Right cardiac atrium (tissue), 5 donors: ENCODE measurements at regions of chr15 and their contacts with region 1.

Region 1: GRCh38 chr15:75201609-75202250 is at the start of gene C15orf39:
- DNase-seq: peak; percentile 75 to 91 (median 90)
- ATAC-seq: peak; percentile 79 to 84
- H3K4me3 ChIP-seq: peak within 1 kb of the TSS; percentile 52
- H3K27ac ChIP-seq: peak within 1 kb of the TSS; percentile 69
- H3K4me1 ChIP-seq: peaks cover 3% of the 10 kb centered on the region
- H3K27me3 ChIP-seq: no peaks in the 10 kb centered on the region
- total RNA-seq, gene C15orf39: 7.4 to 12.7 (median 9.1) TPM

Region 2: DNA sequence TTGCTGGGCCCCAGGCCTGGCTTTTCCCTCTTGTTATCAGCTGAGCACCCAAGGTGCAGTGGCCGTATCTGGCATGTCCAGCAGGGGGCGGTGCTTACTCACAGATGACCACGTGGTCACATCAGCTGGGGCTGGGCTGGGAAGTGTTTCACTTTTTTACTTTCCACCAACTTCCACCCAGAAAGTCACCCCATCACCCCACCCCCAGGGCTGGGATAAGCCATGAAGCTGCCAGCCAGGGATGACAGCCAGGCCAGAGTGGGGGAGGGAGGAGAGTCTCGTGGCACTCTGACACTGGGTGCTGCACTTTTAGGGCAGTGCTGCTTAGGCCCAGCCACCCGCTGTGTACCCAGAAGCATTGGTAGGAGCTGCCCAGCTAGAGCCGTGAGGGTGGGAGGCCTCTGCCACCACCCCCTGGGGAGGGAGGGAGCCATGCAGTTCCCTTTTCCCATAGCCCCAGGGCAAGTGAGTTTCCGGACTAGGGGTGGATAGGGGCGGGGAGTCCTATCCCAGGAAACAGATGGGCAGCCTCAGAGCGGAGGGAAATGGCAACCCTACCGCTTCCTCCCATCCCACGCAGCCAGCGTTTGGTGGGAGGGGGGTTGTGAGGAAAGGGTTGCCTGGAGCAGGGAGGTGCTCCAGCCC is 172.2 kb before region 1 on chr15:
- intact Hi-C with region 1: loop called in 3 of 4 experiments (anchors 1 to 5 kb)
- DNase-seq: peak; percentile 94 to 98 (median 96)
- ATAC-seq: peak; percentile 87 to 88
- H3K4me3 ChIP-seq: no peak overlapping the region
- H3K27ac ChIP-seq: peak overlapping the region; percentile 50
- H3K4me1 ChIP-seq: peaks cover 8% of the 10 kb centered on the region
- H3K27me3 ChIP-seq: no peaks in the 10 kb centered on the region

Region 3: DNA sequence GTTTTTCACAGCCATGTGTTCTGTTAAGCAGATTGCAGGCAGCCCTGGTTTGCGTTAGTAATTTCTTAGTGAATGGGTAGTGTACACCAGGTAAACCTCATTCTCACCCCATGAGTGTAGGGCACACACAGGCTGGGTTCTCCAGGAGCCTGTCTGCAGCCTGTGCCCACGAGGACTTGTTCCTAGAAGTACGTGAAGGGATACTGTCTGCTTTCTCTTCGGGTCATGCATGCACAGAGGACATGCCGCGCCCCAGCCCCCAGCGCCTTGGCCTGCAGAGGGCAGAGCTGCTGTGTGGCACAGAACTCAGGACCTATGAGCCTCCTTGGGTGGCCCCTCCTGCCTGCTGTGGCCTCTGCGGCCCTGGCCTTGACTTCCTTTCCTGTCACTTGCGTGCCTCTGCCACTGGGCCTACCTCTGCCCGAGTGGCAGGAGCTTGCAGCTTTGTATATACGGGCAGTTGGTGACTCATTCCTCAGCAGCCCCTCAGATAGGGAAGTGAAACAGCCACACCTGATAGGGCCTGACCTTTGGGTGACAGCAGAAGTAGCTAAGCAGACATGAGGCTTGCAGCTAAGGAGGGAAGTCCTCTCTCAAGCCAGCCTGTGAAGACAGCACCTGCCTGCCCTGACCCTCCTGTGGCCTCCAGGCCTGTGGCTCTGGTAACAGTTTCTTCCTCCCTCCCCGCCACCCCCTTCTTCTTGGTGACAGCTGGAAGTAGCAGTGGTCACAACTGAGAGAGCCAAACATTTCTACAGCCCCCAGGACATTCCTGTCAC is 158.8 kb before region 1 on chr15:
- intact Hi-C with region 1: loop called in 2 of 4 experiments (anchors 1 to 5 kb)
- DNase-seq: peak; percentile 83 to 94 (median 92)
- ATAC-seq: peak; percentile 57 to 63
- H3K4me3 ChIP-seq: no peak overlapping the region
- H3K27ac ChIP-seq: peak overlapping the region; percentile 95
- H3K4me1 ChIP-seq: peaks cover 31% of the 10 kb centered on the region
- H3K27me3 ChIP-seq: no peaks in the 10 kb centered on the region

Region 4: DNA sequence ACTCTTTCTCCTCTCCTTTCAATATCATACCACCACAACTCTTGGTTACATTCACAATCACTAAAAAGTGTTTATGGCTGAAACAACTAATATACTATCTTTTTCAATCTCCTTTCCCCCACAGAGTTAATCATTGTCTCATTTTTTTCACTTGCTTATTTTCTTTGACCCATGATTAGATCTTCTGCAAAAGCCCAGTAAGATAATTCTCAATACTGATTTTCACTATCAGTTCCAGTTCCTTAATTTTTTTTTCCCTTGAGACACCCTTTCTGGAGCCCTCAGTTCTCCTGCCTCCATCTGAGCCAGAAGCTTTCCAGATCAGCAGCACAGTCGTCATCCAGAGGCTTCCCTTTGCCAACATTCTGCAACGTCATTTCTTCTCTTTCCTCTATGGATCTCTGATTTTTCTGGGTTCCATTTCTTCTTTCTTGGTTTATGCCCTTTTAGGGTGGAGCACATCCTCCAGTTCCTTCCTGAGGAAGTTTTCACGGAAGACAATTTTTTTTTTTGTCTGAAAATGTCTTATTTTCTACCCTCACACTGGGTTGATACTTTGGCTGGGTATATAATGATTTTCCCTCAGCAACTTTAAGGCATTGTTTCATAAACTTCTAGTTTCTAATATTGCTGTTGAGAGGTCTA is 88.8 kb before region 1 on chr15:
- intact Hi-C with region 1: loop called in 1 of 4 experiments (anchors 10 kb)
- DNase-seq: no peak
- ATAC-seq: peak in 1 of 2 donors; percentile 54
- H3K4me3 ChIP-seq: no peak overlapping the region
- H3K27ac ChIP-seq: no peak overlapping the region
- H3K4me1 ChIP-seq: no peaks in the 10 kb centered on the region
- H3K27me3 ChIP-seq: no peaks in the 10 kb centered on the region